CD4-positive, alpha-beta T cell (primary cell): ENCODE measurements at regions of chr9 and their contacts with region 1.

Region 1: DNA sequence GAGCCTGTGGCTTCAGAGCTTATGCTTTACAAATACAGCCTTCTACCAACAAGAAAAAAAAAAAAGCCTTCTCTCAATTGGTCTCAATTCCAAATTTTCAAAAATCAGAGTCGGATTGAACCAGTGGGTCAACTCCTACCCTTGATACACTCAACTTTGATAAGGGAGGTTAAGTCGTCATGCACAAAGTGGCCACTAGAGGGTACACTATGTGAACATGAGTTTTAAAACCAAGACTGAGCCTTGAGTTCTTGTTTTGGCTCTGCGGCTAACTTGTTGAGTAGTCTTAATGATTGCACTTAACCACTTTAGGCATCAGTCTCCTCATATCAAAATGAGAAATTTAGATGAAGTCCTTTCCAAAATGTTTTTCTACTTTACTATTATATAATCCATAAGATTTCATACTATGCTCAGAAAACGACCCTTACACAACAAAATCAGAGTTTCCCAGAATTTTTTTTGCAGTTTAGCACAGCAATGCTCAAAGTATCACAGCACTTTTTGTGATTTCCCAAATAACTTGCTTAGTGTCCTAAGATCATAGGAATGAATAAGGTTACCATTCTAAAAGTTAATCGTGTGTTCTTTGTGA is 92.9 kb upstream of the MTAP start:
- DNase-seq: peak; percentile 15 to 77 (median 52)
- ATAC-seq: peak; percentile 72
- H3K4me3 ChIP-seq: no peak overlapping the region
- H3K4me3 Mint-ChIP-seq: no peak overlapping the region
- H3K27ac ChIP-seq: no peak overlapping the region
- H3K27ac Mint-ChIP-seq: no peak overlapping the region
- H3K4me1 ChIP-seq: peaks cover 4% of the 10 kb centered on the region
- H3K4me1 Mint-ChIP-seq: peaks cover 26% of the 10 kb centered on the region
- H3K27me3 ChIP-seq: no peaks in the 10 kb centered on the region
- H3K27me3 Mint-ChIP-seq: no peaks in the 10 kb centered on the region
- CTCF ChIP-seq: peak; percentile 95

Region 2: GRCh38 chr9:21473236-21473635 is 236.3 kb before region 1 on chr9:
- CTCF ChIA-PET with region 1: no interaction called
- POLR2A ChIA-PET with region 1: no interaction called
- intact Hi-C with region 1: loop called in 1 of 2 experiments (anchors 5 kb)
- DNase-seq: no peak
- ATAC-seq: no peak
- H3K4me3 ChIP-seq: no peak overlapping the region
- H3K4me3 Mint-ChIP-seq: no peak overlapping the region
- H3K27ac ChIP-seq: no peak overlapping the region
- H3K27ac Mint-ChIP-seq: no peak overlapping the region
- H3K4me1 ChIP-seq: no peaks in the 10 kb centered on the region
- H3K4me1 Mint-ChIP-seq: no peaks in the 10 kb centered on the region
- H3K27me3 ChIP-seq: no peaks in the 10 kb centered on the region
- H3K27me3 Mint-ChIP-seq: peaks cover 6% of the 10 kb centered on the region
- CTCF ChIP-seq: no peak

Region 3: DNA sequence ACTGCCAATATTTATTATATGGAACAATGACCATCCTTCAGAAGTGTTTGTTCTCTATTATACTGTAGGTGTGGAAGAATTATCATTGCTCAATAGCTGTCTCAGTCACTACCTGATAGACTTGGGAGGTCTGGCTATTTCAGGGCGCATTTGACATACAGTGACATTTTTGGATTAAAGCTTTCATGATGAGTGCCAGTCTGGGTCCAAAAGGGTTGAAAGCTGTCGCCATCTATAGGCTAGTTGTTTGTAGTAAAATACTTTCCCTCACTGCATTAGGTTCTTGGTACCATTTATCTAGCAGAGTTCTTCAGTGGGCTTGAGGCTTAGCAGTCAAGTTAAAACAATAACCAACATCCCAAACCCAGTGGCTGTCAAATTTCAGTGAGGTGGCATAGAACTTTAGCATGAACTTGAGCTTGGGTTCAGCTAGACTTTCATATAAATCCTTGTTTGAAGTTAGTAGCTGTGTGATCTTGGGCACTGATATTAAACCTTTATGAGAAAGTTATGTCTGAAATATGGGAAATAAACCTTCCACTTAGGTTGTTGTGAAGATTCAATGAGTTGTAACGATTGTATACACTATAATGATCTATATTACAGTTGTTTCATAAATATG is 410.1 kb after region 1 on chr9:
- CTCF ChIA-PET with region 1: no interaction called
- POLR2A ChIA-PET with region 1: no interaction called
- intact Hi-C with region 1: no loop called
- DNase-seq: peak in 3 of 14 experiments; percentile 38 to 56 (median 47)
- ATAC-seq: no peak
- H3K4me3 ChIP-seq: no peak overlapping the region
- H3K4me3 Mint-ChIP-seq: no peak overlapping the region
- H3K27ac ChIP-seq: no peak overlapping the region
- H3K27ac Mint-ChIP-seq: no peak overlapping the region
- H3K4me1 ChIP-seq: no peaks in the 10 kb centered on the region
- H3K4me1 Mint-ChIP-seq: no peaks in the 10 kb centered on the region
- H3K27me3 ChIP-seq: no peaks in the 10 kb centered on the region
- H3K27me3 Mint-ChIP-seq: peaks cover 13% of the 10 kb centered on the region
- CTCF ChIP-seq: no peak